Posterior vena cava (tissue), 2 donors: ENCODE measurements at regions of chr12 and their contacts with region 1.

Region 1: DNA sequence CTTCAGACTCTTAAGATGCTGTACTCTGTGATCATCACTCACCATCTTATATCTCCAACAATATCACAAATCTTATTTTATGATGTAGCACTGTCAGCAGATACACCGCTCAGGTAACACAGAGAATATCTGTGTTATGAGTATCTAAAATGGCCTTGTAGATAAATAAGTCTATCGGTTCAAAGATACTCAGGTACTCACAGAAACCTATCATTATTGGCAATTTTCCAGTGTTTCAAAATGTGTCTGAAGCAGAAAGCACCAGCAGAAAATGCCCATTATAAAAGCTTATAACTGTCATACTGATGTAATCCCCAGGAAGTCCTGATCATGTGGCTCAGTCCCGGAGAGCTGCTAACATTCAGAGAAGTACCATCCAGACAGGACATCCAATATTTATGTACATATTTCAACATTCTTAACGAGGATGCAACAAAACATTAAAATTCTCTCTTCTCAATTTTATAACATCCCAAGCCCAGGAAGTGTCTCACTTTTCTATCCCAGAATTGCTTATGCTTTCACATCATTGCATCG is 190.7 kb upstream of the LMNTD1 start:
- DNase-seq: no peak

Region 2: GRCh38 chr12:26535826-26536225 is 792.1 kb after region 1 on chr12:
- intact Hi-C with region 1: loop called in 1 of 2 experiments (anchors 5 kb)
- DNase-seq: no peak